CD4-positive, alpha-beta T cell (primary cell): ENCODE measurements at regions of chr4 and their contacts with region 1.

Region 1: DNA sequence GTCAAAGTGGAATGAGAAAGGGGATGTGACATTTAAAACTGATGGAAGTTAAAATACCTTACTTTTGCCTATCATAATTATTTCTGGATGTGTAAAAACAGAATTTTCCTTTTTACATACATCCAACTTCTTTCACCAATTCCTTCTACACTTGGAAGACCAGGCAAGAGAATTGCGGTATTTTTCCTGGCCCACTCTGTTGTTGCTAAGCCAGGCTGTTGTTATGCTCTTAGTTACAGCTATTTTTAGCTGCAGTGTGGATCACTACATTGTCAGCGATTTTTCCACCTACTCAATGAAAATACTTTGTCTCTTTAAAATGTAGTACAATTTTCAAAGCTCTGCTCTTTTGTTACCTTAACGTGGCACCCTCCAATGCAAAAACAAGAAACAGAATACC is 43.4 kb downstream of the NKX6-1 start:
- DNase-seq: no peak
- ATAC-seq: no peak
- H3K4me3 ChIP-seq: no peak overlapping the region
- H3K4me3 Mint-ChIP-seq: no peak overlapping the region
- H3K27ac ChIP-seq: no peak overlapping the region
- H3K27ac Mint-ChIP-seq: no peak overlapping the region
- H3K4me1 ChIP-seq: no peaks in the 10 kb centered on the region
- H3K4me1 Mint-ChIP-seq: no peaks in the 10 kb centered on the region
- H3K27me3 ChIP-seq: no peaks in the 10 kb centered on the region
- H3K27me3 Mint-ChIP-seq: peaks cover 44% of the 10 kb centered on the region
- CTCF ChIP-seq: no peak

Region 2: DNA sequence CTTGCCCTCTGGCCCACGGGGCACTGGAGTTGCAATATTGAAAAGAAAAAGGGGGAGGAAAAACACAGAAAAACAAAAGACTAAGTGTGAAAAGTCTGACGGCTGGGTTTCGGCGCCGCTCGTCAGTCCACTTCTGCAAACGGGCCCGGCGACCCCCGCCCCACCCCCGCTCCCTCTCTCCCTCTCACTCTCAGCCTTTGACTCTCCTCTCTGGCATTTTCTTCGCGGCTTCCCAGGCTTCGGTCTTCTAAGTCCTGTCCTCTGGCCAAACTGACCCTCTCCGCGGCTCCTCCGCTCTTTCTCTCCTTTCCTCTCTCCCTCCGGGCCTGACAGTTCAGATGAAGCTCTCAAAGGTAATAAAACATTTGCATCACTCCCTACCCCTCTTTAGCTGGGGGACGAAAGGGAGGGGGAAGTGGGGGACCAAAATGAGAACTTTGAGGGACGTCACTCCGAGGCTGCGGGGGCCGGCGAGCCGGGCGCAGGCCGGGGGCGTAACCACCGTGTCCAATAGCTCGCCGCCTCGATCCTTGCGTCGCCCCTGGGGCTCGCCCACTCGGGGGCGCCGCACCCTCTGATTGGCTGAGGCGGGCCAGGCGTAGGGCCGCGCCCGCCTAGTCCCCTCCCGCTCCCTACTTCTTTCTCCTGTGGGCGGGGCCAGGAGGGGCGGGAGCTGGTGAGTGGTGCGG is 43.4 kb after region 1 on chr4 and contains the start of gene NKX6-1:
- CTCF ChIA-PET with region 1: no interaction called
- POLR2A ChIA-PET with region 1: no interaction called
- intact Hi-C with region 1: loop called in 1 of 2 experiments (anchors 1 kb)
- DNase-seq: peak in 2 of 14 experiments; percentile 27 to 28
- ATAC-seq: no peak
- H3K4me3 ChIP-seq: peak within 1 kb of the TSS; percentile 42
- H3K4me3 Mint-ChIP-seq: peak within 1 kb of the TSS; percentile 84
- H3K27ac ChIP-seq: no peak within 1 kb of the TSS
- H3K27ac Mint-ChIP-seq: peak within 1 kb of the TSS; percentile 21
- H3K4me1 ChIP-seq: peaks cover 34% of the 10 kb centered on the region
- H3K4me1 Mint-ChIP-seq: peaks cover 21% of the 10 kb centered on the region
- H3K27me3 ChIP-seq: peaks cover 87 to 100% of the 10 kb centered on the region in 2 experiments
- H3K27me3 Mint-ChIP-seq: peaks cover 95% of the 10 kb centered on the region
- CTCF ChIP-seq: no peak
- total RNA-seq, gene NKX6-1: not detected